HEK293T (cell line): ENCODE measurements at regions of chr1 and their contacts with region 1.

Region 1: DNA sequence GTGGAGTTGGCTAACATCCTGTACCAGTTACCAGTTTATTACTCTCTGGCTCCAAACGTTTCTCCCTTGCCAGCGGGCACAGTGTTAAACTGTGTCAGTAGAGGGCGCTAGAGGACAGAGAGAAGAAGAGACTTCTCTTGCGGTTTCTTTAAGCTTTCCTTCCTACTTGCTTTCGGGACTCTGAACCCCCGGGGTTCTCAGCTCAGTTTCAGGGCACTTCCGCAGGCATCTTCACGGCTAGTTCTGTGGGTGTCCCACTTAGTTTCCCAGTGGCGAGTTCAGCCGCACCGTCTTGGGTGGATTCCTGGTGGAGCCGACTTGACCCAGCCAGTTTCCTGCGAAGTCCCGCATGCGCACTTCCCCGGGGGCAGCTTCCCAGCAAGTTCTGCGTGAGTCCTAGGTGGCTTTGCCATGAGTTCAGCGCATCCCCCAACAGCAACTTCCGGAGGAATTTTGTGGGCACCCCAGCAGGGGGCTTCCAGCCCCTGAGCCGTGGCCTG is 37.9 kb upstream of the BTG2 start:
- DNase-seq: peak; percentile 81

Region 2: GRCh38 chr1:203026031-203026989 is 241.1 kb before region 1 on chr1 and contains the start of gene PPFIA4:
- CTCF ChIA-PET with region 1: interaction called, 10 read pairs
- POLR2A ChIA-PET with region 1: interaction called, 3 read pairs
- DNase-seq: peak; percentile 100

Region 3: GRCh38 chr1:203117611-203118575 is 149.5 kb before region 1 on chr1:
- CTCF ChIA-PET with region 1: interaction called, 14 read pairs
- POLR2A ChIA-PET with region 1: no interaction called
- DNase-seq: peak; percentile 96

Region 4: GRCh38 chr1:203326830-203327683 is 59.7 kb after region 1 on chr1:
- CTCF ChIA-PET with region 1: interaction called, 19 read pairs
- POLR2A ChIA-PET with region 1: interaction called, 9 read pairs
- DNase-seq: peak; percentile 98

Region 5: DNA sequence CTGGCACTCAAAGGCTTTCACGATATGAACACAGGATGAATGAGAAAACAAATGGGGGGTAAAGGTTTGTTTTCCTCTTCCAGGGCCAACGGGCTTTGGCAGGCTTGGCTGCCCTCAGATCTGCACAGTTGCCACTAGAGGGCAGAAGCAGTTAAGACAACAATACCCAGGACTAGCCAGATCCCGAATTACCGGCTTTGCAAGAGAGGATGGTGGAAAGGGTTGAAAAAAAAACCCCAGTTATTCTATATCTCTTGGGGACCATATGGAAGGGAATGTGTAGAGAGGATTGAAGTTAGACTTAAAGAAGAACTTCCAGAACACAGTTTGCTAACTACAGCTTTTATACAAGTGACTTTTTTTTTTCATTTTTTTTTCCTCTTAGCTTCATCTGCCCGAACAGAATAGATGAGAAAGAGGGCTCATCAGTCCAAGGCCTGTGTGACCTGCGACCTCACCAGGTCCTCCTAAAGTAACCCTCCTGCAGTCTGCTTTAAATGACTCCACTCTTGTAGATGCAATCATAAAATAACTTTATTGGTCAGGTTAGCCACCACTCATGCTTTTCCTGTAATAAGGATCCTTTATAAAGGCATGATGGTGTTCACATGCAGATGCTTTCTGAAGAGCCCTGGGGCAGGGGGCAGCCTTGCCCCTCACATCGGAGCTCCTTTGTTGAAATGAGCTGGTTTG is 72.9 kb after region 1 on chr1:
- CTCF ChIA-PET with region 1: interaction called, 36 read pairs
- POLR2A ChIA-PET with region 1: interaction called, 3 read pairs
- DNase-seq: peak; percentile 88